ENCODE measurements at regions of chr11 and their contacts with region 1.

Region 1: DNA sequence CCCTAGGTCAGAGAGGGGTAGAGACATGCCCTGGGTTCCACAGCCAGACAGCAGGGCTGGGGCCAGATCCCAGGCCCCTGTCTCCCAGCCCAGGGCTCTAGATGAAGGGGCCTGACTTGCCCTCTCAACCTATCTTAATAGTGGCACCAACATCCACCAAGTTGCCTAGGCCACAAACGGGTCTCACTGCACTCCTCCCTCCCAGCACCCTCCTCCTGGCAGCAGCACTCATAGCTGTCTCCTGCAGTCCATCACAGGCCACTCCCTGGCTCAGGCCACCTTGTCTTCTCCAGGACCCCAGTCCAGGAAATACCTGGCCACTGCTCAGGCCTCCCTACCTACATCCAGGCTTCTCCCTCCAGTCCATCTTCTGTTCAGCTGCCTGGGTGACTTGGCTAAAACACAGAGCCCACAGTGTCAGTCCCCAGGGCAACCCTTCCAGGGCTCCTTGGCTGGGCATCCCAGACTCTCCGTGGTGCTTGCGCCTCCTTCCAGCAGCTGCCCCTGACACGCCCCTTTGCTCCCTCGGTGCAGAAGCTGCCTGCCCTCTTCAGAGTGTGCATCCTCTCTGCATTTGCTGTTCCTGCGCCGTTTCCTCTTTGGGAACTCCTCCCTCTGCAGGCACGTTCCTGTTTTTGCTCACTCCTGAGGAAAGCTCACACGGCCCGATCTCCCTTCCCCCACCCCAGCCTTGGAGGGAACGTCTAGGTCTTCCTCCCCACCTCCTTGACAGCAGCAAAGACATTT is 40.5 kb downstream of the LRRC32 start:
- DNase-seq: peak; percentile 27
- ATAC-seq: peak; percentile 14
- H3K4me3 Mint-ChIP-seq: peak overlapping the region; percentile 44
- H3K27ac Mint-ChIP-seq: peak overlapping the region; percentile 80
- H3K4me1 Mint-ChIP-seq: peaks cover 38% of the 10 kb centered on the region
- H3K27me3 Mint-ChIP-seq: no peaks in the 10 kb centered on the region

Region 2: DNA sequence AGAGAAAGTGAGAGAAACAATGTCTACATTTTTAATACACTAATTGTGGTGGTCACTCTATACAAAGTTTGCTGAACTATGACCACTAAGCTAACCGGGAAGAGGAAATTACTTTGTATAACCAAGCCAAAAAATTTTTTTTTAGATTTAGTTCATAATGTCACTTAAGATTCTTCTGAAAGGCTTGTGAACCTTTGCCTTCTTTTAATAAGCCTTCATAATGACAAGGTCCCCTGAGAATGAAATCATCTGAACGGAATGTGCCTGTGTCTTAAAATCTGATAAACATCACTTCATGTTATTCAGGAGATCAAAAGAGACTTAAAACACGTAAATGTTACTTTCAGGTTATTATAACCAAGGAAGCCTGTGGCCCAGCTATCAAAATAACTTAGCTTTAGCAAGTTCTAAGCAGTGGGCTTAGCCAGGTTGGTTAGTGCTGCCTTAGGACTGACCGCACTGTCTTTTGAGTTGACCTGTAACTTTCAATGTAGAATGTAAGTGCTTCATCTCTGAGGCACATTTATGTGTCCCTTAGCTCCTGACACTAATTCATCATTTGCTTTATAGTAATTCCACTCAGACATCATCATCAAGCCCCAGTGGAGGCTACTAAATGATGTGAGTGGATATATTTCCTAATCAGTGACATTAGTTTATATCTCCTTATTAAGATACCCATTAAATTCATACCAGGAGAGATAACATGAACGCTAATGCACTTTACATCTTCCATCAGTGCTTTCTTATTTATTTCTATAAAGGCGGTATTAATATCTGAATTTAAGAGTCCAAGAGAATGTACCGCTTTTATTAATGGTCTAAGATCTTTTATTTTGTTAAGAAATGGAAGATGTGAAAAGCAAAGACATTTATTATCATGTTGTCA is 546.2 kb before region 1 on chr11:
- CTCF ChIA-PET with region 1: no interaction called
- POLR2A ChIA-PET with region 1: no interaction called
- intact Hi-C with region 1: no loop called
- DNase-seq: no peak
- ATAC-seq: no peak
- H3K4me3 Mint-ChIP-seq: no peak overlapping the region
- H3K27ac Mint-ChIP-seq: no peak overlapping the region
- H3K4me1 Mint-ChIP-seq: no peaks in the 10 kb centered on the region
- H3K27me3 Mint-ChIP-seq: no peaks in the 10 kb centered on the region

Region 3: GRCh38 chr11:76588455-76589325 is 41.3 kb before region 1 on chr11:
- CTCF ChIA-PET with region 1: interaction called, 4 read pairs
- POLR2A ChIA-PET with region 1: interaction called, 3 read pairs
- intact Hi-C with region 1: loop called in 1 of 2 experiments (anchors 1 kb)
- DNase-seq: peak; percentile 78
- ATAC-seq: peak; percentile 89
- H3K4me3 Mint-ChIP-seq: no peak overlapping the region
- H3K27ac Mint-ChIP-seq: peak overlapping the region; percentile 75
- H3K4me1 Mint-ChIP-seq: peaks cover 20% of the 10 kb centered on the region
- H3K27me3 Mint-ChIP-seq: peaks cover 2% of the 10 kb centered on the region

Region 4: GRCh38 chr11:76642341-76642740 is 12.3 kb after region 1 on chr11:
- CTCF ChIA-PET with region 1: no interaction called
- POLR2A ChIA-PET with region 1: interaction called, 5 read pairs
- intact Hi-C with region 1: loop called in 1 of 2 experiments (anchors 2 kb)
- DNase-seq: peak; percentile 74
- ATAC-seq: peak; percentile 96
- H3K4me3 Mint-ChIP-seq: no peak overlapping the region
- H3K27ac Mint-ChIP-seq: peak overlapping the region; percentile 87
- H3K4me1 Mint-ChIP-seq: peaks cover 9% of the 10 kb centered on the region
- H3K27me3 Mint-ChIP-seq: peaks cover 51% of the 10 kb centered on the region

Region 5: DNA sequence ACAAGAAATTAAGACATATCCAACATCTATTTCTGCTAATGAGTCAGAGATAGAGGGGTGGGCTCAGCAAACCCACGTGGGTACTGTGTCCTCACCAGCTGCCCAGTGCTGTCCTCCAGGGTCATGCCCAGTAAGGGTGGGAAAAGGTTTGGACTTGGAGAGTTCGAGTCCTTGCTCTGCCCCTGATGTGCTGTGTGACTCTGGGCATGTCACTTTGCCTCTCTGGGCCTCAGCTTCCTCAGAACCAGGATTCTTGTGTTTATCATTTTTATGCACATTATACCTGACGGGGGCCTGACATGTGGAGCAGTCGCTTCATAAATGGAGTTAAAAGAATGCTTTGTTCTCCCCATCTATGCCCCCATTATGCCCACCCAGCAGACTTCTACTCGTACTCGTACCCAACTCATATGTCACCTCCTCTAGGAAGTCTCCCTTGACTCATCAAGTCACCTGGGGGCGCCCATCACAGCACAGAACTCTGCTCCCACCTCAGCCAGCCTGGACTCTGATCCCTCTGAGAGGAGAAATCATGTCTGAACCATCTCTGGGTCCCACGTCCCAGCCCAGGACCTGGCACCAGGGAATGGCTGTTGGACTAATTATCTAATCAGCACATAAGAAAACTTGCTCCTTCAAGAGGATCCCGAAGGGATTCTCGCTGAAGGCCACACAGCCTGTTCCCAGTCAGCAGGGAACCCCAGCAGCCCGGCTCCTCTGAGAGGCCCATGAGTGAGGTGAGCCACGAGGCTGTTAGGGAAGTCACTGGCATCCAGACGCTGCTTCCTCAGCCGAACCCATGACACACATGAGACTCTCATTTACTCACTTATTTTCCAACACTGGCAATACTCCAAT is 114.4 kb after region 1 on chr11:
- CTCF ChIA-PET with region 1: no interaction called
- POLR2A ChIA-PET with region 1: no interaction called
- intact Hi-C with region 1: no loop called
- DNase-seq: no peak
- ATAC-seq: no peak
- H3K4me3 Mint-ChIP-seq: no peak overlapping the region
- H3K27ac Mint-ChIP-seq: no peak overlapping the region
- H3K4me1 Mint-ChIP-seq: no peaks in the 10 kb centered on the region
- H3K27me3 Mint-ChIP-seq: peaks cover 6% of the 10 kb centered on the region